ENCODE measurements at regions of chr1 and their contacts with region 1.

Region 1: GRCh38 chr1:3856908-3857790 is at the starts of genes CEP104 and DFFB:
- DNase-seq: peak; percentile 76 to 92
- H3K4me3 ChIP-seq: peak within 1 kb of the TSS; percentile 94 to 98
- H3K27ac ChIP-seq: peak within 1 kb of the TSS; percentile 79 to 80
- H3K4me1 ChIP-seq: peaks cover 6 to 15% of the 10 kb centered on the region in 2 donors
- H3K27me3 ChIP-seq: no peaks in the 10 kb centered on the region
- CTCF ChIP-seq: peak in 1 of 3 experiments; percentile 7
- total RNA-seq, gene CEP104: 93.6 TPM
- total RNA-seq, gene DFFB: 45.4 TPM

Region 2: GRCh38 chr1:3900119-3900968 is 43.2 kb after region 1 on chr1 and contains the start of gene C1orf174:
- intact Hi-C with region 1: loop called (anchors 2 kb)
- DNase-seq: peak; percentile 92 to 98
- H3K4me3 ChIP-seq: peak within 1 kb of the TSS; percentile 86 to 95
- H3K27ac ChIP-seq: peak within 1 kb of the TSS; percentile 95 to 98
- H3K4me1 ChIP-seq: peaks cover 3 to 7% of the 10 kb centered on the region in 2 donors
- H3K27me3 ChIP-seq: no peaks in the 10 kb centered on the region
- CTCF ChIP-seq: no peak
- total RNA-seq, gene C1orf174: 14.9 TPM